Activated T-helper 1 cell treated with anti-CD3 and anti-CD28 coated beads, Interleukin-12 subunit alpha, Interleukin-12 subunit beta, Interleukin-2, Interleukin-4 antibody, amounts not matched to agents 30 ng/mL and 10 ng/mL and 1 ng/mL, durations not matched to agents 14 hours and 24 hours and 36 hours (primary cell): ENCODE measurements at regions of chr1 and their contacts with region 1.

Region 1: DNA sequence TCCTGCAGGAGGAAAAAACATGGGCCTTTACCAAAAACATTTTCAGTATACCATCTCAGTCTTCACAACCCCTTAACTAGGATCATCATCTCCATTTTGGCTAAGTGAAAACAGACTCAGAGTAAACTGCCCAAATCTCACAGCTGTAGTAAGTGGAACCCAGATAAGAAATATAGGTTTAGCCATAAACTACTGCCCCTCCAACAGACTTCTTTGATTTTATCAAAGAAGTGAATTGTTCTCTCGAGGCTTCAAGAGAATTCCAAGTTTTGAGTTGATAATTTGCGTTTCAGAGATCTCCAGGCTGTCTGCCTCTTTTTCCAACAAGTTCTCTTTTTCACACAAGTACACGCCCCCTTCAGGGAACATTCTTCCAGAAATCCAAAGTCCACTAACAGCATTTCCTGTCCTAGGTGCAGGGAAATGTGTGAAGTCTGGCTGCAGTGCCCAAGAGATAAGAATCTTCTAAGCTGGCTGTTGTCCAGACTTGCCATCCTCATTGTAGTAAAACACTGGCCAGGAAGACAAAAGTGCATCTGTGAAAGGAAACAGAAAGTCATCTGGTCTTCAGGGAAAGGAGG is 30.8 kb downstream of the RNF19B start:
- DNase-seq: no peak
- H3K4me3 Mint-ChIP-seq: no peak overlapping the region
- H3K27ac Mint-ChIP-seq: no peak overlapping the region
- H3K4me1 Mint-ChIP-seq: peaks cover 49% of the 10 kb centered on the region
- H3K27me3 Mint-ChIP-seq: no peaks in the 10 kb centered on the region

Region 2: GRCh38 chr1:33007190-33008050 is 73.6 kb after region 1 on chr1:
- intact Hi-C with region 1: loop called (anchors 1 kb)
- DNase-seq: peak; percentile 27
- H3K4me3 Mint-ChIP-seq: no peak overlapping the region
- H3K27ac Mint-ChIP-seq: no peak overlapping the region
- H3K4me1 Mint-ChIP-seq: peaks cover 53% of the 10 kb centered on the region
- H3K27me3 Mint-ChIP-seq: no peaks in the 10 kb centered on the region

Region 3: GRCh38 chr1:33055210-33056008 is 121.6 kb after region 1 on chr1:
- intact Hi-C with region 1: loop called (anchors 1 kb)
- DNase-seq: peak; percentile 12
- H3K4me3 Mint-ChIP-seq: no peak overlapping the region
- H3K27ac Mint-ChIP-seq: no peak overlapping the region
- H3K4me1 Mint-ChIP-seq: peaks cover 14% of the 10 kb centered on the region
- H3K27me3 Mint-ChIP-seq: peaks cover 5% of the 10 kb centered on the region

Region 4: GRCh38 chr1:33086384-33086850 is 152.6 kb after region 1 on chr1:
- intact Hi-C with region 1: loop called (anchors 1 kb)
- DNase-seq: no peak
- H3K4me3 Mint-ChIP-seq: no peak overlapping the region
- H3K27ac Mint-ChIP-seq: no peak overlapping the region
- H3K4me1 Mint-ChIP-seq: peaks cover 33% of the 10 kb centered on the region
- H3K27me3 Mint-ChIP-seq: peaks cover 28% of the 10 kb centered on the region